ENCODE measurements at regions of chr22 and their contacts with region 1.

Region 1: DNA sequence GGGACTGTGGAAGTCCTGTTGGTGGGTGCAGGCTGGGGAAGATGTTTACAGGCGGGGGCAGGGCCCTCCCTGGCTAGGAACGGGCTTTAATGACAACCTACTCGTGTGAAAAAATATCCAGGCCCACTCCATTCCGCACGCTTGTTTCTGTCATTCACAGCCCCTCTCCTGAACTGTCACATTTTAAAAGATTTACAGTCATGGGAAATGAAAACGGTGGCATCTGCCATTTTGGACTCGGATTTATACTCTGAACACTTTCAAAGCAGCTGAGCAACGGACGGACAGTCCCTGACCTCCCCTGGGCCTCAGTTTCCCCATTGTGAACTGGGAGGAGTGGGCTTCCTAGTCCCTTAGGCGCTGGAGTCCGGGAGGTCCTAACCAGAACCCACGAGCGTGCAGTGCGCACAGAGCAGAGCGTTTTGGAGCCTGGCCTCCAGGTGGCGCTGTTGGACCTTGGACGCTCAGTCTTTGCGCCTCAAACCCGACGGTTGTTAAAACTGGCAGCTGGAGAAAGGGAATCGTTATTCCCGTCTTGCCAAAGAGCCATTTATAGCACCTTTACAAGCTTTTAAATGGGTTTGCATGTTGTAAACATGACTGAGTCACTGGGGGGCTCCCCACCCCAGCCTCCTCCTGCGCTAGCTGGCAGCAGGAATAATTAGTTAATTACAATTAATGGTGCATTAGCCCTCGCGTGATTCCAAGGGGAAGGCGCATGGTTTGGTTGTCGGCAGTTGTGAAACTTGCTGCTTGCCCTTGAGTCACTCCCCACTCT is 75.3 kb downstream of the FBLN1 start:
- DNase-seq: peak; percentile 86
- H3K4me3 ChIP-seq: no peak overlapping the region
- H3K27ac ChIP-seq: no peak overlapping the region
- H3K4me1 ChIP-seq: no peaks in the 10 kb centered on the region
- H3K27me3 ChIP-seq: no peaks in the 10 kb centered on the region
- CTCF ChIP-seq: peak; percentile 95

Region 2: DNA sequence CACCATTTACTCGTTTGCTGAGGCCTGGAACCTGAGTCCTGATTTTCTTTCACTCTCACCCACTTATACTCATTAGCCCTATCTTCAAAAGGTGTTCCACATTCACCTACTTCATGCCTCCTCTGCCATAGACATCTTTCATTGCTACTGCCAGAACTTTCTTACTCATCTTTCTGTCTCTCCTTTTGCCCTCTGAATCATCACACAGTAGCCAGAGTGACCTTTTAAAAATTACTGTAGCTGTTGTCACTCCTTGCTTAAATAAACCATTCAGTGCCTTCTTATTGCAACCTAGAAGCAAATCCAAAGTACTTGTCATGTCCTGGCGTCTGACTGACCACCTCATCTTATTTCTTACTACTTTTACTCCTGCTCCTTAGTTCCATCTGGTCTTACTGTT is 131.9 kb after region 1 on chr22:
- intact Hi-C with region 1: loop called (anchors 10 kb)
- DNase-seq: no peak
- H3K4me3 ChIP-seq: no peak overlapping the region
- H3K27ac ChIP-seq: no peak overlapping the region
- H3K4me1 ChIP-seq: no peaks in the 10 kb centered on the region
- H3K27me3 ChIP-seq: no peaks in the 10 kb centered on the region
- CTCF ChIP-seq: no peak